ENCODE measurements at regions of chr20 and their contacts with region 1.

Region 1: DNA sequence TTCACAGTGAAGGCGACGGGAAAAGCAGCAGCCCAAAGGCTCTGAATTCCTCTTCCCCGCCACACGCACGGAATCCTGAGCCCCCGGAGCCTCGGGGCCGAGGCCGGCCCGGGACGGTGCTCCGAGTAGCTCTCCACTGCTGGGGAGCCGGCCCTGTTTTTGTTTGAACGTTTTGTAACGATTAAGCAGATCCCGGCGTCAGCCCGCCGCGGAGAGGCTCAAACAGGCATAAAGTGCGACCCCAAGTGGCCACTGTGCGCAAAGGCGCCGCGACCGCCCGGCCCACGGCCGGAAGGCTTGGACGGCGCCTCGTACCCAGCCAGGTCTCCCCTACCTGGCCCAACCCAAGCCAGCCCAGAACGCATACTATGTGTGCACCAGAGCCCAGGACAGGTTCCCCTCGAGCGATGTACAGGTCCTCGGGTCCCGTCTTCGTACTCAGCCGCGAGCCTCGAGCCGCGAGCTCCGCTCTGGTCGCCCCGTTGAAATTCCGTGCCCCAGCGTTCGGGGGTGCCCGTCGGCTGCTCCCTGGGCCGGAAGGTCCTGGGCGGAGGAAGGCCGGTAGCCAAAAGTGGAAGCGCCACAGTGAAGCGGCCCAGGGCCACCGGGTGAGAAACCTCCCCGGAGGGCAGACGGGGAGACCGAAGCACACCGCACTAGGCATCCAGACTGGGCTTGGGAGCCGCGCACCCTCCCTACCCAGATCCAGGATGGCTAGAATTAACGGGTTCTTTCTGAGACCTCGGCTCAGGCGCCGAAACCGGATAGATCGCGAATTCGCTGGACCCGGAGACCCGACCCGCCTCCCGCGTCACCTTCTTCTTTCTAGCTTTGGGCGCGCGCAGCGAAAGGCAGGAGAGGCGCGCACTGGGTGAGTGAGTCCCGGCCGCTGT is 1.2 kb upstream of the MAFB start:
- DNase-seq: peak; percentile 81 to 98 (median 90)

Region 2: DNA sequence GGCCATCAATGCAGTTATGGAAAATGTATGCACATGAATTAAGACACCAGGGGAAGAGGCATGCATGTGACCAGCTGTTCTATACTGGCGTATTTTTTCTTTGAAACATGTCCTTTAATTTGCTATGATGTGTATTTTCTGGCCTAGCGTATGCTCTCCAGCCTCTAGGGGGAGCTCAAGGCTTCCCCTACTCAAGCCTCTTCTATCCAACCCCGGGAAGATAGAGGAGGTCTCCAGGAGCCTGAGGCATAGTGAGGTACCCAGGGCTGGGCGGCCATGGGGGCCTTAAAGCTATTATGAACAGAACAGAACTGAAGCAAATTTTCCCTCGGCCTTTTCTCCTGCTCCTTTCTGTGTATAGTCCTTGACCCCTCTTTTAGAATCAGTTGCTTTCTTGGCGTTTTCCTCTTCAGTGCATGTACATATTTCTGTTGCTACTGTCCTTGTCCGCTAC is 530.1 kb before region 1 on chr20:
- intact Hi-C with region 1: loop called (anchors 1 kb)
- DNase-seq: peak in 4 of 10 donors; percentile 3 to 58 (median 31)

Region 3: GRCh38 chr20:40265825-40266533 is 424.2 kb before region 1 on chr20:
- intact Hi-C with region 1: loop called (anchors 1 kb)
- DNase-seq: peak in 4 of 10 donors; percentile 17 to 42 (median 20)

Region 4: DNA sequence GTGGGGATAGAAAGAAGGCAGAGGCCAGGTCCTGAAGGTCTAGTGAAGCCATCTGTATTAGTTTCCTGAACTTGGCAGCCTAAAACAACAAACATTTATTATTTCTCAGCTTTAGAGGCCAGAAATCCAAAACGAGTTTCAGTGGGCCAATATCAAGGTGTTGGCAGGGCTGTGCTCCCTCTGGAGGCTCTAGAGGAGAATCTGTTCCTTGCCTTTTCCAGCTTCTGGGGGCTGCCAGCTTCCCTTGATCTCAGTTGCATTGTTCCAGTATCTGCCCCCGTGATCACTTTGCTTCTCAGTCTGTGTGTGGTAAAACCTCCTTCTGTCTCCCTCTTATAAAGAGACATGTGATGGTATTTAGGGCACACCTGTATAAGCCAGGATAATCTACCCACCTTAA is 83.5 kb before region 1 on chr20:
- intact Hi-C with region 1: no loop called
- DNase-seq: no peak

Region 5: GRCh38 chr20:40668449-40669228 is 21.6 kb before region 1 on chr20:
- intact Hi-C with region 1: no loop called
- DNase-seq: no peak

Region 6: DNA sequence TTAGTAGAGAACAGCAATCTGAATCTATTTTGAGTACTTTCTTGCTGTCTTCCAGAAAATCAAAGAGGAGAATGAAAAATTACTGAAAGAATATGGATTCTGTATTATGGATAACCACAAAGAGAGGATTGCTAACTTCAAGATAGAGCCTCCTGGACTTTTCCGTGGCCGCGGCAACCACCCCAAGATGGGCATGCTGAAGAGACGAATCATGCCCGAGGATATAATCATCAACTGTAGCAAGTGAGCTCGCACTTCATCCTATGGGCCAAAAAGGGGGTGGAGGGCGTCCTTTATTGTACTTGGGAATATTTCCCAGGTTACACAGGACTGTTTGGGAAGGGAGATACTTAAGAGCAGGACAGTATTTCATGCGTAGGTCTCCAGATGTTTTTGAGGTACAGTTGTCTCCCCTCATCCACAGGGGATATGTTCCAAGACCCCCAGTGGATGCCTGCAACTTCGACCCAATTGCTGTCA is 409.9 kb after region 1 on chr20:
- intact Hi-C with region 1: no loop called
- DNase-seq: no peak

Measured in posterior cingulate gyrus (tissue), 11 donors.